CD14-positive monocyte (primary cell): ENCODE measurements at regions of chr19 and their contacts with region 1.

Region 1: DNA sequence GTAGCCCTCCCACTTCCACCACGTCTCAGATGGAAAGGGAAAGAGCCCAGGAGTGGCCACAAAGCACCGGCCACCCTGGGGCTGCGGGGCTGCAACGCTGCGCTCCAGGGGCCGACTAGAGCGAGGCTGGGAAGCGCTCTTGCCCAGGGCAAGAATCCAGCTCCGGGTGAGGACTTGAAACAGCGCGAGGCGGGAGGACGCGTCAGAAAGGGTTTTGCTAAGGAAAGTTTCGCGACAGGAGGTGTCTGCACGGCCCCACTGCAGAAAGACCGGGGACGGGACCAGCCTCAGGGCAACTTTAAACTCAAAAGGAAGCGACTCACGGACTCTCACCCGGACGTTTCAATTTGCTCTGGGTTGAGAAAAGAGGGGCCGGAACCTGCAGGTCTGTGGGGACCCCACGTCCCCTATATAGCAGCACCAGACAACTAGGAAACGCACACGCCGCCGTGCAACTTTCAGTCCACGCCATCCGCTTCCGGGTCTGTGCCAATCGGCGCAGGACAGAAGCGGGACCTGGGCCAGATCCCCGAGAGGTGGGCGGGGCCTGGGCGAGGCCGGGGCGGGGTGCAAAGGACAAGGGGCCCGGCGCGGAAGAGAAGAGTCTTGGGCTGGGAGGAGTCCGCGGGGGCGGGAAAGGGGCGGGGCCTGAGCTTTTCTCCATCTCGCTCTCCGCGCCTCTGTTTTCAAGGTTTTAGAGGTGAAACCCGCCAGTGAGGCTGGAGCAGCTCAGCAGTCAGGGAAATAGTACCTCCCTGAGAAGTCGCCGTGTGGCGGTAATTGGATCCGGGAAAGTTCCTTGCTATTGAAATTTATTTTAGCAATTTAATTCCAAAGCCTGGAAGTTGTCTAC is at the start of gene ZNF816:
- DNase-seq: peak; percentile 91 to 93 (median 92)
- H3K4me3 ChIP-seq: peak within 1 kb of the TSS; percentile 62 to 82 (median 72)
- H3K4me3 Mint-ChIP-seq: peak within 1 kb of the TSS; percentile 98 to 99
- H3K27ac ChIP-seq: peak within 1 kb of the TSS; percentile 54 to 85
- H3K27ac Mint-ChIP-seq: peak within 1 kb of the TSS; percentile 83 to 93 (median 90)
- H3K4me1 ChIP-seq: peaks cover 14 to 17% of the 10 kb centered on the region in 2 donors
- H3K4me1 Mint-ChIP-seq: peaks cover 22% of the 10 kb centered on the region
- H3K27me3 ChIP-seq: no peaks in the 10 kb centered on the region
- H3K27me3 Mint-ChIP-seq: no peaks in the 10 kb centered on the region
- CTCF ChIP-seq: no peak
- polyA plus RNA-seq, gene ZNF816: 1.4 to 4.3 (median 2.0) TPM

Region 2: DNA sequence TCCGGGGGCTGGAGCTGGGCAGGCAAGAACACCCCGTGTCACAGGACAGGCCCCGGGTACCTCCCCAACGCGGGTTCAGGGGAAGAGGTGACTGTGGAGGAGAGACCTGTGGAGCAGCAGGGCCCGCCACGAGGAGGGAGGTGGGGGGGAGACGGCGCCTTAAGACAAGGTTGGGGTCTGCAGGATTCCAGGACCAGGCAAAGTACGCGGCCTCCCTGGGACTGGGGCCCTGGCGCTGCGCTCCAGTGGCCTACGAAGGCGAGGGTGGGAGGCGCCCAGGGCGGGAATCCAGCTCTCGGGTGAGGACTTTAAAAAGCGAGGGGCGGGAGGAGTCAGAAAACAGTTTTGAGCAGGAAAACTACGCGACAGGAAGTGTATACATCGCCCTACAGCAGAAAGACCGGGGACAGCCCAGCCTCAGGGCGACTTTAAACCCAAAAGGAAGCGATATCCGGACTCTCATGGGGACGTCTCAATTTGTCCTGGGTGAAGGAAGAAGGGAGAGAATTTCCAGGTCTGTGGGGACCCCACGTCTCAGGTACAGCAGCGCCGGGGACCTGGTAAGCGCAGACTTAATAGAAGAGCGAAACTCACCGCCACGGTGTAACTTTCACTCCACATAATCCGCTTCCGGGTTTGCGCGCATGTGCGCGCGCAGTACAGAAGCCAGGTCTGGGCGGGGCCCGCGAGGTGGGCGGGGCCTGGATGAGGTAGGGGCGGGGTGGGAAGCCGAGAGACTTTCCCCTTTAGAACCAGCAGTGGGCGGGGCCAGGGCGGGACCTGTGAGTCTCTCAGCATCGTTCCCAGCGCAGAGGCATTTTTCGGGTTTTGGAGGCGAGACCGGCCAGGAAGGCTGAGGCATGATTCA is 324.7 kb before region 1 on chr19 and contains the start of gene ZNF83:
- intact Hi-C with region 1: loop called in 1 of 2 experiments (anchors 10 kb)
- DNase-seq: peak; percentile 84 to 92 (median 89)
- H3K4me3 ChIP-seq: peak within 1 kb of the TSS; percentile 90 to 92 (median 91)
- H3K4me3 Mint-ChIP-seq: peak within 1 kb of the TSS; percentile 96 to 97
- H3K27ac ChIP-seq: peak within 1 kb of the TSS; percentile 83 to 95
- H3K27ac Mint-ChIP-seq: peak within 1 kb of the TSS; percentile 86 to 99 (median 93)
- H3K4me1 ChIP-seq: peaks cover 16 to 19% of the 10 kb centered on the region in 2 donors
- H3K4me1 Mint-ChIP-seq: peaks cover 22% of the 10 kb centered on the region
- H3K27me3 ChIP-seq: no peaks in the 10 kb centered on the region
- H3K27me3 Mint-ChIP-seq: peaks cover 0 to 3% (median 1%) of the 10 kb centered on the region in 3 donors
- CTCF ChIP-seq: no peak
- polyA plus RNA-seq, gene ZNF83: 2.4 to 47.1 (median 7.2) TPM

Region 3: GRCh38 chr19:52897144-52897935 is 65.3 kb before region 1 on chr19 and contains the start of gene ZNF320:
- intact Hi-C with region 1: loop called in 1 of 2 experiments (anchors 1 kb)
- DNase-seq: peak; percentile 93 to 94 (median 93)
- H3K4me3 ChIP-seq: peak within 1 kb of the TSS; percentile 81 to 94 (median 93)
- H3K4me3 Mint-ChIP-seq: peak within 1 kb of the TSS; percentile 91 to 94
- H3K27ac ChIP-seq: peak within 1 kb of the TSS; percentile 93 to 96
- H3K27ac Mint-ChIP-seq: peak within 1 kb of the TSS; percentile 84 to 96 (median 92)
- H3K4me1 ChIP-seq: peaks cover 13 to 20% of the 10 kb centered on the region in 2 donors
- H3K4me1 Mint-ChIP-seq: peaks cover 13% of the 10 kb centered on the region
- H3K27me3 ChIP-seq: no peaks in the 10 kb centered on the region
- H3K27me3 Mint-ChIP-seq: peaks cover 0 to 6% (median 4%) of the 10 kb centered on the region in 3 donors
- CTCF ChIP-seq: no peak
- polyA plus RNA-seq, gene ZNF320: 1.6 to 4.4 (median 3.4) TPM

Region 4: DNA sequence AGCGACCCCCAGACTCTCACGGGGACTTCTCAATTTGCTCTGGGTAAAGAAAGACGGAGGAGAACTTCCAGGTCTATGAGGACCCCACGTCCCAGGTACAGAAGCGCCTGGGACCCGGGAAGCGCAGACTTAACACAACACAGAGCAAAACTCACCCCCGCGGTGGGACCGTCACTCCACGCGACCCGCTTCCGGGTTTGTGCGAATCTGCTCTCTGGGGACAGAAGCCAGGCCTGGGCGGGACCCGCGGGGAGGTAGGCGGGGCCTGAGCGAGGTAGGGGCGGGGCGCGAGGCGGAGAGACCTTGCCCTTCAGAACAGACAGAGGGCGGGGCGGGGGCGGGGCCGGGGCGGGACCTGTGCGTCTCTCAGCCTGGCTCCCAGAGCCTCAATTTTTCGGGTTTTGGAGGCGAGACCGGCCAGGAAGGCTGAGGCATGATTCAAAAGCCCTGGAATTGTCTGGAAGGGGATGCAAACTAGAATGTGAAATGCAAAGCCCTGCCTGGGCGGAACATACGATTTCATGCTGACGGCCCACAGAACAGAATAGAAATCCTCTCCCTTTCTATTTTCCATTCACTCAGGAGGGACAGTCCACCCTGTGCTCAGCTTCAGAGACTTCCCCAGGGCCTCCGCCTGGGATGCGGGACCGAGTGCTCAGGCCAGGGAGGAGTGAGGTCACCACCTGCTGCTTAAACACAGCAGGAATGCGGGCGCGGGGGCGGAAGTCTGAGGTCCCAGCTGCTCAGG is 20.1 kb before region 1 on chr19:
- intact Hi-C with region 1: loop called in 1 of 2 experiments (anchors 1 kb)
- DNase-seq: peak; percentile 87 to 89 (median 88)
- H3K4me3 ChIP-seq: peak overlapping the region; percentile 75 to 99 (median 91)
- H3K4me3 Mint-ChIP-seq: peak overlapping the region; percentile 95 to 100
- H3K27ac ChIP-seq: peak overlapping the region; percentile 47 to 92
- H3K27ac Mint-ChIP-seq: peak overlapping the region; percentile 84 to 95 (median 93)
- H3K4me1 ChIP-seq: peaks cover 25 to 42% of the 10 kb centered on the region in 2 donors
- H3K4me1 Mint-ChIP-seq: peaks cover 47% of the 10 kb centered on the region
- H3K27me3 ChIP-seq: no peaks in the 10 kb centered on the region
- H3K27me3 Mint-ChIP-seq: peaks cover 3 to 10% (median 9%) of the 10 kb centered on the region in 3 donors
- CTCF ChIP-seq: no peak

Region 5: DNA sequence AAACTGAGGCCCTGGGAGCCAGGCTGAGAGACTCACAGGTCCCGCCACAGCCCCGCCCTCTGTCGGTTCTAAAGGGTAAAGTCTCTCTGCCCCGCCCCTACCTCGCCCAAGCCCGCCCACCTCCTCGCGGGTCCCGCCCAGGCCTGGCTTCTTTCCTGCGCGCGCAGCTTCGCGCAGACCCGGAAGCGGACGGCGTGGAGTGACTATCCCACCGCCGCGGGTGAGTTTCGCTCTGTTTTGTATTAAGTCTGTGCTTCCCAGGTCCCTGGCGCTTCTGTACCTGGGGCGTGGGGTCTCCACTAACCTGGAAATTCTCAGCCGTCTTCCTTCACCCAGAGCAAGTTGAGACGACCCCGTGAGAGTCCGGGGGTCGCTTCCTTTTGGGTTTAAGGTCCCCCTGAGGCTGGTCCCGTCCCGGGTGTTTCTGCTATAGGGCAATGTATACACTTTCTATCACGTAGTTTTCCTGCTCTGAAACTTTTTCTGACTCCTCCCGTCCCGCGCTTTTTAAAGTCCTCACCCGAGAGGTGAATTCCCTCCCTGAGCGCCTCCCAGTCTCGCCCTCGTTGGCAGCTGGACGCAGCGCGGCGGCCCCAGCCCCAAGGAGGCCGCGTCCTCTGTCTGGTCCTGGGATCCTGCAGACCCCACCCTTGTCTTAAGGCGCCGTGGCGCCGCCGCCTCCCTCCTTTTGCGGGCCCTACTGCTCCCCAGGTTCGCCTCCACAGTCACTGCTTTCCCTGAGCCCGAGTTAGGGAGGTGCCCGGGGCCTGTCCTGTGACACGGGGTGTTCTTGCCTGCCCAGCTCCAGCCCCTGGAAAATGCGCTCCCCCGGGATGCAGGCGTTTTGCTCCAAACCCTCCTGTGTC is 432.6 kb after region 1 on chr19 and contains the start of gene ZNF765:
- intact Hi-C with region 1: loop called in 1 of 2 experiments (anchors 10 kb)
- DNase-seq: peak; percentile 88 to 91 (median 90)
- H3K4me3 ChIP-seq: peak within 1 kb of the TSS; percentile 80 to 94 (median 81)
- H3K4me3 Mint-ChIP-seq: peak within 1 kb of the TSS; percentile 96 to 99
- H3K27ac ChIP-seq: peak within 1 kb of the TSS; percentile 53 to 81
- H3K27ac Mint-ChIP-seq: peak within 1 kb of the TSS; percentile 88 to 93 (median 90)
- H3K4me1 ChIP-seq: peaks cover 13 to 19% of the 10 kb centered on the region in 2 donors
- H3K4me1 Mint-ChIP-seq: peaks cover 21% of the 10 kb centered on the region
- H3K27me3 ChIP-seq: no peaks in the 10 kb centered on the region
- H3K27me3 Mint-ChIP-seq: peaks cover 0 to 4% (median 1%) of the 10 kb centered on the region in 3 donors
- CTCF ChIP-seq: peak; percentile 64
- polyA plus RNA-seq, gene ZNF765: 1.5 to 5.0 (median 3.4) TPM